Mammary epithelial cell (primary cell): ENCODE measurements at regions of chr5 and their contacts with region 1.

Region 1: DNA sequence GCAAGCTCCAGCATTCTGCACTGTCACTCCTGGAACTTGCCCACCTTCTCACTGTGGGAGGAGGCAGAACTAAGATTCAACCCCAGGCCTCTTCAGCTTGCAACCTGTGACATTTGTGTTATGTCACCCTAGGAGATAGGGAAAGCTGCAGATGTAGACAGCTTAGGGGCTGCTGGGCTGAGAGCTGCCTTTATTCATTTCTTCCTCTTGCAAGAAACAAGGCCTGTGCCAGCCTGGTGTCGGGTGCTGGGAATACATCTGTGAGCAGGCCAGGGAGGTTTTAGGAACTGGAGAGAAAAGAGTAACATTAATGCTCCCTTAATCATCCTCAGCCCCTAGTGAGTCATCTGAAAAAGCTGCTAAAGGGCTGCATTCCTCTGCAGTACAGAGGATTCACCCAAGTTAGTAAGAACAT is 101.8 kb downstream of the FGF18 start:
- DNase-seq: peak; percentile 76
- H3K4me3 ChIP-seq: no peak overlapping the region
- H3K27ac ChIP-seq: peak overlapping the region; percentile 39
- H3K4me1 ChIP-seq: peaks cover 26% of the 10 kb centered on the region
- H3K27me3 ChIP-seq: no peaks in the 10 kb centered on the region
- CTCF ChIP-seq: peak in 1 of 2 donors; percentile 16

Region 2: DNA sequence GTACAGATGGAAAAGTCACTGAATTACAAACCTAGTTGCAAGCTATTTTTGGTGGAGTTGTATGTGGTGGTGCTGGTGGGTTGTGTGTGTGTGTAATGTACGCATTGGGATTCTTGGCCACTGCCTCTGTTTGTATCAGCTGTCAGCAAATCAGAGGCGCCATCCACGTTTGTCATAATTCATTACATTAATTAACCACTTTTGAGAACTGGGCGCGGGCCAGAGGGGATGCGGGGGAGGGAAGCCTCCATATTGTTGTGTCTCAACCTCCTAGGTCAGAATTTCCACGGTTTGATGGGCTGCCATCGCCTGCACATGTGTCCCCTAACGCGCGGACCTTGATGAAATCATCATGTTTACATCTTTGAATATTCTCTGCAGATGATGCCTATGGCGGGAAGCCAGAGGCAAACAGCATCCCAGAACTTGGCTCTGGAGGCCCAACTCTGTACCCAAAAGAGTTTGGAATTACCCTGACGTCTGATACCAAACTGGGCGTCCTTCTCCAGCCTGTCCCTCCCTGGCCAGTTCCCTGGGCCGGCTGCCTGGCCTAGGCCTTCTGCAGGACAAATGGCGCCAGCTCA is 46.9 kb before region 1 on chr5:
- CTCF ChIA-PET with region 1: no interaction called
- dilution Hi-C with region 1: loop called (anchors 5 kb)
- in situ Hi-C with region 1: no loop called
- intact Hi-C with region 1: no loop called
- DNase-seq: no peak
- H3K4me3 ChIP-seq: no peak overlapping the region
- H3K27ac ChIP-seq: no peak overlapping the region
- H3K4me1 ChIP-seq: no peaks in the 10 kb centered on the region
- H3K27me3 ChIP-seq: no peaks in the 10 kb centered on the region
- CTCF ChIP-seq: no peak

Region 3: DNA sequence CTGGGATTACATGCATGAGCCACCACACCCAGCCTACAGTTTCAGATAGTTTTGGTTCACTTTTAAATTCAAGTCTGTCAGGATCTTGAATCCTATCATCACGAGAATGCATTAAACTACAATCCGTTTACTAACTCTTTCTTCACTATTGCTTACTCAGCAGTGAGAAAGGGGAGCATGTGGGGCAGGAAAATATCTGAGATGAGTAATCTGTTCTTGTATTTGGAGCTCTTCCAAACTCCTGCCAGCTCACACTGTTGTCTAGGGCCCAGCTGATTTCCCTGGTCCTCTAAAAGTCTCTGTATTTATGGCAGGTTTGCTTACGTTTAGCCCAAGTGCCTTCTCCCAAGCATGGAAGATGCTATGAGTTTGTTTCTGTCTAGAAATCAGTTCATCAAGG is 50.4 kb after region 1 on chr5:
- CTCF ChIA-PET with region 1: no interaction called
- dilution Hi-C with region 1: no loop called
- in situ Hi-C with region 1: no loop called
- intact Hi-C with region 1: loop called (anchors 5 kb)
- DNase-seq: peak; percentile 69
- H3K4me3 ChIP-seq: no peak overlapping the region
- H3K27ac ChIP-seq: no peak overlapping the region
- H3K4me1 ChIP-seq: no peaks in the 10 kb centered on the region
- H3K27me3 ChIP-seq: no peaks in the 10 kb centered on the region
- CTCF ChIP-seq: no peak